Activated CD8-positive, alpha-beta T cell treated with anti-CD3 and anti-CD28 coated beads for 36 hours (primary cell): ENCODE measurements at regions of chr19 and their contacts with region 1.

Region 1: GRCh38 chr19:12974301-12975220 is 5.2 kb downstream of the DAND5 start:
- DNase-seq: no peak
- ATAC-seq: no peak
- H3K4me3 Mint-ChIP-seq: no peak overlapping the region
- H3K27ac Mint-ChIP-seq: no peak overlapping the region
- H3K4me1 Mint-ChIP-seq: peaks cover 4% of the 10 kb centered on the region
- H3K27me3 Mint-ChIP-seq: peaks cover 10% of the 10 kb centered on the region
- CTCF ChIP-seq: no peak

Region 2: GRCh38 chr19:12825254-12826131 is 149.1 kb before region 1 on chr19:
- CTCF ChIA-PET with region 1: no interaction called
- POLR2A ChIA-PET with region 1: no interaction called
- intact Hi-C with region 1: no loop called
- DNase-seq: peak; percentile 45
- ATAC-seq: peak; percentile 27
- H3K4me3 Mint-ChIP-seq: no peak overlapping the region
- H3K27ac Mint-ChIP-seq: no peak overlapping the region
- H3K4me1 Mint-ChIP-seq: peaks cover 4% of the 10 kb centered on the region
- H3K27me3 Mint-ChIP-seq: peaks cover 39% of the 10 kb centered on the region
- CTCF ChIP-seq: peak; percentile 51

Region 3: DNA sequence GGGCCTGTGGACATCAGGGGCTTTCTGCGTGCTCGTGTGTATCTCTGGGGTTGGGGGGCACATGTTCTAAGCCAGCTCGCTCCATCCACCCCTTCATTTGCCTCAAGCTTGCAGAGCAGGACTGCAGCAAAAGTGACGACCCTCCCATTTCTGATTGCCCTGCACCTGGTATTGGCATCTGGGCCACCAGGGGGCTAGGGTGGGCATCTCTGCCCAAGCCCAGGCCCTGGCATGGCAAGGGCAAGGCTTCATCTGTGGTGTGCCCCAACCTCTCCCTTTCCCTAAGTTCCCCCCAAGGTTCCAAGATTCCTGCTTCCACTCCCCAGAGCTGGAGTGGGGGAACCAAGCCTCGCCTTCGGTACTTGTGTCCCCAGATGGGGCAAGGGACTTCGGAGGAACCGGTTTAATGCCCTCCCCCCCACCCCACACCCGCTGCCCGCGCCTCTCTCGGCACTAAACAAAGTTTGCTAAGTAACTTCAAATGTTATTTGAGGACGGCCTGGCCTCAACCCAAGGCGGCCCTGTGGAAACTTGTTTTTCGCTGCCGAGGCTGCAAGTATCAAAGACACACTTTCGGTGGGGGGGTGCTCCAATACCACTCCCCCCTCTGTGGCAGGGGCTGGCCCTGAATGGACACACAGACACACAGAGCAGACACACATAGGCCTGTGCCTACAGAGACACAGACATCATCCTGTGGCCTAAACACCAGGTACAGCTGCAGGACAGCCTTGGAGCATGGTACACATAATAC is 32.9 kb after region 1 on chr19:
- CTCF ChIA-PET with region 1: interaction called, 16 read pairs
- POLR2A ChIA-PET with region 1: no interaction called
- intact Hi-C with region 1: no loop called
- DNase-seq: no peak
- ATAC-seq: no peak
- H3K4me3 Mint-ChIP-seq: no peak overlapping the region
- H3K27ac Mint-ChIP-seq: no peak overlapping the region
- H3K4me1 Mint-ChIP-seq: peaks cover 4% of the 10 kb centered on the region
- H3K27me3 Mint-ChIP-seq: peaks cover 25% of the 10 kb centered on the region
- CTCF ChIP-seq: no peak

Region 4: GRCh38 chr19:13069415-13070359 is 95.1 kb after region 1 on chr19:
- CTCF ChIA-PET with region 1: interaction called, 11 read pairs
- POLR2A ChIA-PET with region 1: no interaction called
- intact Hi-C with region 1: loop called (anchors 5 kb)
- DNase-seq: no peak
- ATAC-seq: no peak
- H3K4me3 Mint-ChIP-seq: no peak overlapping the region
- H3K27ac Mint-ChIP-seq: no peak overlapping the region
- H3K4me1 Mint-ChIP-seq: no peaks in the 10 kb centered on the region
- H3K27me3 Mint-ChIP-seq: no peaks in the 10 kb centered on the region
- CTCF ChIP-seq: no peak

Region 5: GRCh38 chr19:13082192-13083007 is 107.8 kb after region 1 on chr19:
- CTCF ChIA-PET with region 1: interaction called, 20 read pairs
- POLR2A ChIA-PET with region 1: no interaction called
- intact Hi-C with region 1: no loop called
- DNase-seq: no peak
- ATAC-seq: no peak
- H3K4me3 Mint-ChIP-seq: no peak overlapping the region
- H3K27ac Mint-ChIP-seq: no peak overlapping the region
- H3K4me1 Mint-ChIP-seq: no peaks in the 10 kb centered on the region
- H3K27me3 Mint-ChIP-seq: no peaks in the 10 kb centered on the region
- CTCF ChIP-seq: no peak